ENCODE measurements at regions of chr9 and their contacts with region 1.

Region 1: DNA sequence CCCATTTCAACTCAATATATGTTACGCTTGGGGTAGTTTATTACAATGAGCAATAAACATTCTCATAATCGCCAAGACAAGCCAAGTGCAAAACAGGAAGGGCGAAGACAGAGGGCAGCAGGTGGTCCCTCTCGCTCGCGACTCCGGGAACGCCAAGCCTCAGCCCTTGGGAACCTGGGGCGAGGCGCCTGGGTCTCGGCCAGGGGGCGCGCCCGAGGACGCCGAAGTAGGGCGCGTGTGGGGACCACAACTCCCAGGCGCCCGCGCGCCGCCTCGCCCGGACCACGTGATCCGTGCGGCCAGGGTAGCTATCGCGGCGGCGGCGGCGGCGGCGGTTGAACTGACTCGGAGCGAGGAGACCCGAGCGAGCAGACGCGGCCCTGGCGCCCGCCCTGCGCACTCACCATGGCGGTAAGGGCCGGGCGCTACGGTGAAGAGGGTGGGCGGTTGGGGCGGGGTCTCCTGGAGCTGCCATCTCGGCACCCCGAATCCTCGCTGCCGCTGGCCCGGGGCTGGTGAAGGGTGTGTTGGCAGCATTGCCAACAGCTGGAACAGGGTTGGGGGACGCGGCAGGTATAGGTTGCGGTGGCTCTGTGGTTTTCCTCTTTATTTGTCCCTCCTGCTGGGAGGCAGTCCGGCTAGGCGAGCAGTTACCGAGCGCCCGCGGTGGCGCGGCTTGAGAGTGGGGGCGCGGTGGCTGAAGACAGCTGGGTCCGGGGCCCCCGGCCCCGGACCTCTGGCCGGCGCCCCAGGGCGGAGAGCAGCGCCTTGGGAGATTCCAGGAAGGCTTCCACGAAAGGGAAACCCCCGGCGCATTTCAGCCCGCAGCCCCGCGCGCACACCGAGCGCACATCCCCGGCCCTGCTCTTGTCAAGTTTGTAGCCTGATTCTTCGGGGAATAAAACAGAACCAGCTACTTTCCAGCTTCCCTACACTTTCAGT is at the start of gene SLC31A2:
- DNase-seq: peak; percentile 95
- H3K4me3 ChIP-seq: peak within 1 kb of the TSS; percentile 79 to 95 (median 88)
- H3K27ac ChIP-seq: peak within 1 kb of the TSS; percentile 82 to 86 (median 85)
- H3K4me1 ChIP-seq: peaks cover 35 to 52% (median 42%) of the 10 kb centered on the region in 4 donors
- H3K27me3 ChIP-seq: no peaks in the 10 kb centered on the region
- CTCF ChIP-seq: peak; percentile 11 to 45 (median 25)
- EP300 ChIP-seq: no peak
- POLR2A ChIP-seq: peak; percentile 42
- total RNA-seq, gene SLC31A2: 11.6 to 19.4 (median 15.8) TPM

Region 2: GRCh38 chr9:113221003-113221799 is 70.3 kb after region 1 on chr9 and contains the starts of genes FKBP15 and SLC31A1:
- intact Hi-C with region 1: loop called (anchors 5 kb)
- DNase-seq: peak; percentile 100
- H3K4me3 ChIP-seq: peak within 1 kb of the TSS; percentile 65 to 89 (median 86)
- H3K27ac ChIP-seq: peak within 1 kb of the TSS; percentile 88 to 93 (median 91)
- H3K4me1 ChIP-seq: peaks cover 29 to 55% (median 45%) of the 10 kb centered on the region in 4 donors
- H3K27me3 ChIP-seq: no peaks in the 10 kb centered on the region
- CTCF ChIP-seq: peak in 1 of 3 experiments; percentile 20
- EP300 ChIP-seq: no peak
- POLR2A ChIP-seq: peak; percentile 45
- total RNA-seq, gene FKBP15: 18.1 to 23.0 (median 20.6) TPM
- total RNA-seq, gene SLC31A1: 8.3 to 10.8 (median 8.9) TPM

Measured in esophagus muscularis mucosa (tissue), 4 donors.